Dendritic cell treated with granulocyte-macrophage colony-stimulating factor and Interleukin-4, amounts not matched to agents 40 ng/mL and 50 ng/mL, for 4 days (primary cell): ENCODE measurements at regions of chr10 and their contacts with region 1.

Region 1: GRCh38 chr10:13348216-13349017 is at the start of gene SEPHS1:
- H3K4me3 Mint-ChIP-seq: peak within 1 kb of the TSS; percentile 82
- H3K27ac Mint-ChIP-seq: peak within 1 kb of the TSS; percentile 80
- H3K4me1 Mint-ChIP-seq: peaks cover 37% of the 10 kb centered on the region
- H3K27me3 Mint-ChIP-seq: peaks cover 28% of the 10 kb centered on the region

Region 2: DNA sequence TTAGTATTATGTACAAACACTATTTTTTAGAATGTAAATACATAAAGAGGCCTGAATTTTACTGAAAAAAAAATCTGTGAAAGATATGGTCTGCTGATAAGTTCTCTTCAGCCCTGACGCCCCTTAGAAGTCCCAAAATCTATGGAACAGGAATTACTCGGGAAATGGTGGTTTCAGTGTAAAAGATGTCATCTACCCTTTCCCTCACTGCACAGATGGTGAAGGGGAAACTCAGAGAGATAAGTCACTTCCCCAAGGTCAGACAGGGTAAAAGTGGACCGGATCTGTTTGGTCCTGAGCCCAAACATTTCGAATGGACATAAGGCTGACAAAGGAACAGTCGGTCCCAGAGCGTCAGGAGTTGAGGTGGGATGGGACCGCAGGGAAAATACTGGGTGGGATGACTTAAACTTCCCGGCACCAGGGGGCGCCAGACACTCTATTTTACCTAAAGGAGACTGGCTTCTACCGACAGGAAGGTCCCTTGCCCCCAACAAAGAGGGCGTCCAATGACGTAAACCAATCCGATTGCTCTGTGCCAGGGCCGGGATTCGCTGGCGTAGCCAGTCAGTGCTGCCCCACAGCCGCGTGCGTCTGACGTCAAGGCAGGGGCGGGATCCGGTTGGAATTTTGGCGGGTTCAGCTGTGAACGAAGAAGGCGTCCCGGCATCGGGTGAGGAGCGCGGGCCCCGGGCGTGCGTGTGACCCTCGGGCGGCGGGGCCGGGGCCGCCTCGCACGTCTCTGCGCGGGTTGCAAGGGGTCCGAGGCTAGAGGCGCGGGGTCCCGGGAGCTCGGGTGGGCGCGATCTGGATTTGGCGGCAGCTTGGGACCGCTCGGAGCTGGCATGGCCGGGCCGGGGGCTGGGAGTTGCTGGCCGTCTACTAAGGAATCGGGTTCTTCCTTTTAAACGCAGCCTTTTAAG is 187.2 kb before region 1 on chr10 and contains the start of gene MCM10:
- intact Hi-C with region 1: loop called (anchors 2 kb)
- H3K4me3 Mint-ChIP-seq: peak within 1 kb of the TSS; percentile 74
- H3K27ac Mint-ChIP-seq: peak within 1 kb of the TSS; percentile 61
- H3K4me1 Mint-ChIP-seq: peaks cover 15% of the 10 kb centered on the region
- H3K27me3 Mint-ChIP-seq: peaks cover 7% of the 10 kb centered on the region